Adrenal gland (tissue), 19 donors: ENCODE measurements at regions of chr17 and their contacts with region 1.

Region 1: DNA sequence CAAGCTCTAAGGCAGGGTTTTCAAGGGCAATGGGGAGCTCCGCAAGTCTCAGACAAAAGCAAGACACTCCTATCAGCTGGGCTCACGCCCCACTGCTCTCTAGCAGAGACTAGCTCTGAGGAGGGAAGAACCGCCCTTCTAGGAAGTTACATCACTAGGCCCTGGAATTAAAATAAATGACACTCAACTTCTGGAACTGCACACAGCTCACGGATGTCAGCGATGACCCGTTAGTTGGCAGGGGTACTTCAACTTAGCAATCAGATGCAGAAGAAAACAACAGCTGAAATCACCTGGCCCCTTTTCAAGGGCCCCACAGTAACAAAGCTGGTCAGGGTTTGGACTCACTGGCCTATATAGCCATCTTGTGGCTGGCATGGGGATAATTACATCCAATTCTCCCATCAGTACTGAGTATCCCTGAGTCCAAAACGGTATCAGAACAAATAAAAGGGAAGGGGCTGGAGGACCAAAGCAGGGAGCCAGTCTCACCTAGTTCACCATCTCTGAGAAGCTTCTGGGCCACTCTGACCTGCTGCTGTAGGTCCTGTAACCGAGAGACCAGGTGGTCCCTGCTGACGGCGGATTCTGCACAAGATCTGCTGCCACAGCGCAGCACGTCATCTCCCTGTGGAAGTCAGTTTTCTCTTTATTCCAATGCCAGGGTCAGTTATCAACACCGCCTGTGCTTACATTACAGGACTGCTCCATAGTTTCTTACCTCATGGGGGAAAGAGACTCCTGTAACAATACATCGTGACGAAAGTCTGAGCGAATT is 22.2 kb downstream of the SERPINF1 start:
- DNase-seq: peak; percentile 81 to 96 (median 94)
- H3K4me3 ChIP-seq: no peak overlapping the region
- H3K27ac ChIP-seq: peak overlapping the region; percentile 86 to 98 (median 97)
- H3K4me1 ChIP-seq: peaks cover 25 to 46% of the 10 kb centered on the region in 2 donors
- H3K27me3 ChIP-seq: no peaks in the 10 kb centered on the region
- CTCF ChIP-seq: peak; percentile 56 to 93 (median 87)
- POLR2A ChIP-seq: peak; percentile 19 to 74

Region 2: GRCh38 chr17:1724506-1725362 is 59.3 kb before region 1 on chr17 and contains the start of gene WDR81:
- intact Hi-C with region 1: loop called (anchors 5 kb)
- DNase-seq: peak; percentile 86 to 95 (median 92)
- H3K4me3 ChIP-seq: peak within 1 kb of the TSS in 3 of 4 donors; percentile 41 to 98 (median 62)
- H3K27ac ChIP-seq: peak within 1 kb of the TSS; percentile 60 to 94 (median 73)
- H3K4me1 ChIP-seq: peaks cover 9 to 39% of the 10 kb centered on the region in 2 donors
- H3K27me3 ChIP-seq: no peaks in the 10 kb centered on the region
- CTCF ChIP-seq: peak in 2 of 6 experiments; percentile 14 to 31
- POLR2A ChIP-seq: peak in 1 of 2 donors; percentile 40
- total RNA-seq, gene WDR81: 17.6 to 88.8 (median 44.2) TPM

Region 3: DNA sequence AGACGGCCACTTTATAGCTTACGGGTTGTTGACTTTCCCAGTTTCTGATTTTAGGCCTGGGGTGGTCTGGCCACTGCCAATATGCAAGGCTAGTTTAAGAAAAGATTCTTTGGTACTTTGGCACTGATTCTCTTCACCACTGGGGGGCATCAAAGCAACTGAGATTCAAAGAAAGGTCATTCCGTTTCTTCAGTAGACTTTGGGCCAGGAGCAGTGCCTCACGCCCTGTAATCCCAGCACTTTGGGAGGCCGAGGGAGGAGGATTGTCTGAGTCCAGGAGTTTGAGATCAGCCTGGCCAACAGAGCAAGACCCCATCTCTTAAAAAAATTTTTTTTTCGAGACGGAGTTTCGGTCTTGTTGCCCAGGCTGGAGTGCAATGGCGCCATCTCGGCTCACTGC is 98.8 kb after region 1 on chr17:
- intact Hi-C with region 1: no loop called
- DNase-seq: peak in 3 of 7 donors; percentile 23 to 42 (median 32)
- H3K4me3 ChIP-seq: no peak overlapping the region
- H3K27ac ChIP-seq: no peak overlapping the region
- H3K4me1 ChIP-seq: no peaks in the 10 kb centered on the region
- H3K27me3 ChIP-seq: no peaks in the 10 kb centered on the region
- CTCF ChIP-seq: peak; percentile 27 to 52 (median 41)
- POLR2A ChIP-seq: no peak